ENCODE measurements at regions of chr5 and their contacts with region 1.

Region 1: GRCh38 chr5:176415952-176416924 is at the start of gene CLTB:
- DNase-seq: peak; percentile 82
- H3K4me3 ChIP-seq: peak within 1 kb of the TSS; percentile 58 to 84 (median 80)
- H3K27ac ChIP-seq: peak within 1 kb of the TSS; percentile 72
- H3K4me1 ChIP-seq: peaks cover 60% of the 10 kb centered on the region
- H3K27me3 ChIP-seq: no peaks in the 10 kb centered on the region
- CTCF ChIP-seq: peak; percentile 26 to 55
- total RNA-seq, gene CLTB: 166 to 323 TPM

Region 2: DNA sequence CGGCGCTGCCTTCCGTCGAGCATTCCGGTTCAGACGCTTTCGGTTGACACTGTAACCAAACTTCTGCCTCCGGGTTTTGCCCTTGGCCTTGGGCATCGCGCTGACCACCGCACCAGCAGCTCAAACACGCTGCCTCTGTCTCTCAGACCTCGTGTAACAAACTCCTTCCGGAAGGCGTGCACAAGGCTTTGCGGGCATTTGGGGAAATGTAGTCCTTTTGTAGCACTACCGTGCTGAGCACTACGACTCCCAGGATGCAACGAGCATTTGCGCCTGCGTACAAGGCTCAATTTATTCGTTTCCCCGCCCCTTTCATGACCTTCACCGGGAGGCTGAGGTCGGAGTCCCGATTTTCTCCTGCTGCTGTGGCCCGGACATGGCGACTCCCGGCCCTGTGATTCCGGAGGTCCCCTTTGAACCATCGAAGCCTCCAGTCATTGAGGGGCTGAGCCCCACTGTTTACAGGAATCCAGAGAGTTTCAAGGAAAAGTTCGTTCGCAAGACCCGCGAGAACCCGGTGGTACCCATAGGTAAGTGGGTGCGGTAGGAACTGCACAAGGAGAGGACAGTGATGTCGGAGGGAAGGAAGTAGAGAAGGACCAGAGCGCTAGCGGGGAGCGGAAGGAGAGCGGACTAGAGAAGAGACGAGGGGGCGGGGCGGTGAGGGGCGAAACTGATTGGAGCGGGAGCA is 27.6 kb before region 1 on chr5 and contains the starts of genes HIGD2A and NOP16:
- CTCF ChIA-PET with region 1: no interaction called
- dilution Hi-C with region 1: no loop called
- in situ Hi-C with region 1: no loop called
- intact Hi-C with region 1: loop called (anchors 1 kb)
- DNase-seq: peak; percentile 98
- H3K4me3 ChIP-seq: peak within 1 kb of the TSS; percentile 67 to 79 (median 75)
- H3K27ac ChIP-seq: peak within 1 kb of the TSS; percentile 90
- H3K4me1 ChIP-seq: peaks cover 12% of the 10 kb centered on the region
- H3K27me3 ChIP-seq: no peaks in the 10 kb centered on the region
- CTCF ChIP-seq: no peak
- total RNA-seq, gene HIGD2A: 30.3 to 93.0 TPM
- total RNA-seq, gene NOP16: 8.7 to 61.4 TPM

Region 3: DNA sequence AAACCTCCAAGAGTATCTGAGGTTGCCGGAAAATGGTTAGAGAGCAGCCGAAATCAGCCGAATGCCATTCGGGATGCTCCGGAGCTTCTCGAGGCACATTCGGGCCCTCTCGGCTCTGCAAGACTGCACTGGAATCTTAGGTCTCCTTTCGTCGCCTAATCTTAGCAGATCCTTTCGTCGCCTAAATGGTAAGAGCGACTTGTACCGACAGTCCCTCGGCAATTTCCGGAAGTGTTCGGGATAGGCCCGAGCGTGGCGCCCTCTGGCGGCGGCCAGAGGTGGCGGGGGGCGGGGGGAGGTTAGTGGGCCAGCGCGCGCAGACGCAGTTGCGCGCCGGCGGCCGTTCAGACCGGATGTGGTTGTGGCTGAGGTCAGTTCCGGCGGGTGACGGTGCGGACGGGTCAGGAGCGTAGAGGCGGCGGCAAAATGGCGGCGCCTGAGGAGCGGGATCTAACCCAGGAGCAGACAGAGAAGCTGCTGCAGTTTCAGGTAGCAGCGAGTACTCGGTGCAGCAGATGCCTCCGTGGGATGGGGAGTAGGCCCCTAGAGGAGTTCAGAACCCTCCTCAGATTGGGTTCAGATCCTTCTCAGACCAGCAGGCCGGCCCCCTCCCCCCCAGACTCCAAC is 31.9 kb after region 1 on chr5 and contains the start of gene FAF2:
- CTCF ChIA-PET with region 1: interaction called, 8 read pairs
- dilution Hi-C with region 1: no loop called
- in situ Hi-C with region 1: no loop called
- intact Hi-C with region 1: loop called (anchors 1 kb)
- DNase-seq: peak; percentile 98
- H3K4me3 ChIP-seq: peak within 1 kb of the TSS; percentile 66 to 90 (median 82)
- H3K27ac ChIP-seq: peak within 1 kb of the TSS; percentile 85
- H3K4me1 ChIP-seq: peaks cover 5% of the 10 kb centered on the region
- H3K27me3 ChIP-seq: no peaks in the 10 kb centered on the region
- CTCF ChIP-seq: peak; percentile 93 to 98
- total RNA-seq, gene FAF2: 48.5 to 58.8 TPM

Region 4: GRCh38 chr5:176537608-176538504 is 121.6 kb after region 1 on chr5:
- CTCF ChIA-PET with region 1: no interaction called
- dilution Hi-C with region 1: no loop called
- in situ Hi-C with region 1: no loop called
- intact Hi-C with region 1: loop called (anchors 1 kb)
- DNase-seq: peak; percentile 99
- H3K4me3 ChIP-seq: peak overlapping the region; percentile 67 to 88 (median 68)
- H3K27ac ChIP-seq: peak overlapping the region; percentile 91
- H3K4me1 ChIP-seq: peaks cover 57% of the 10 kb centered on the region
- H3K27me3 ChIP-seq: no peaks in the 10 kb centered on the region
- CTCF ChIP-seq: no peak

Region 5: DNA sequence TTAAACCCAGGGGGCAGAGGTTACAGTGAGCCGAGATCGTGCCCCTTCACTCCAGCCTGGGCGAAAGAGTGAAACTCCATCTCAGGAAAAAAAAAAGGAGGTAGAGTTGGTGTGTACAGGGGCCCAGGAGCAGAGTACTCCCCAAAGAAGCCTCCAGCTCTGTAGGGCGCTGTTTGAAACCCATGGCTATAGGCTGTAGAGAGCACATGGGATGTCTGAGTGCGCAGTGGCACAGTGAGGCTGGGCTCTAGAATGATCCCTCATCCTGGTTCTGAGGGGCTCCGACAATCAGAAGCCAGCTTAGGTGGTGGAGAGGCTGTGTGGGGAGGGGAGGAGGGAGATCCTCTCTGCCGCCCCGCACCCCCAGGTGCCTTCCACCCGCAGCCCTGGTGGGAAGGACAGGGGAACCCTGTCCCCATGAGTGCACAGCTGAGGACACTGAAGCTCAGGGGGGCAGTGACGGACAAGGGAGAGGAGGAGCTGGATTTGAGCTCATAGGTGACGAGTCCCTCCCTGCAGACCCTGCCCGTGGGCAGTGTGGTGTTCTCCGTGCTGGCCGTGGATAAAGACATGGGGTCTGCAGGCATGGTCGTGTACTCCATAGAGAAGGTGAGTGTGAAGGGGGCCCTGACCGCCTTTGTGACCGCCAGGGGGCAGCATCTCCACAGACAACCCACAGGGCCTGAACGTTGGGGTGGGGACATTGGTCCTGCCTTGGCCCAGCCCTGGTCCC is 157.5 kb after region 1 on chr5:
- CTCF ChIA-PET with region 1: interaction called, 7 read pairs
- dilution Hi-C with region 1: loop called (anchors 25 kb)
- in situ Hi-C with region 1: loop called in 1 of 2 experiments (anchors 5 kb)
- intact Hi-C with region 1: loop called (anchors 1 kb)
- DNase-seq: peak; percentile 20
- H3K4me3 ChIP-seq: no peak overlapping the region
- H3K27ac ChIP-seq: no peak overlapping the region
- H3K4me1 ChIP-seq: peaks cover 6% of the 10 kb centered on the region
- H3K27me3 ChIP-seq: no peaks in the 10 kb centered on the region
- CTCF ChIP-seq: peak; percentile 69 to 83

Region 6: DNA sequence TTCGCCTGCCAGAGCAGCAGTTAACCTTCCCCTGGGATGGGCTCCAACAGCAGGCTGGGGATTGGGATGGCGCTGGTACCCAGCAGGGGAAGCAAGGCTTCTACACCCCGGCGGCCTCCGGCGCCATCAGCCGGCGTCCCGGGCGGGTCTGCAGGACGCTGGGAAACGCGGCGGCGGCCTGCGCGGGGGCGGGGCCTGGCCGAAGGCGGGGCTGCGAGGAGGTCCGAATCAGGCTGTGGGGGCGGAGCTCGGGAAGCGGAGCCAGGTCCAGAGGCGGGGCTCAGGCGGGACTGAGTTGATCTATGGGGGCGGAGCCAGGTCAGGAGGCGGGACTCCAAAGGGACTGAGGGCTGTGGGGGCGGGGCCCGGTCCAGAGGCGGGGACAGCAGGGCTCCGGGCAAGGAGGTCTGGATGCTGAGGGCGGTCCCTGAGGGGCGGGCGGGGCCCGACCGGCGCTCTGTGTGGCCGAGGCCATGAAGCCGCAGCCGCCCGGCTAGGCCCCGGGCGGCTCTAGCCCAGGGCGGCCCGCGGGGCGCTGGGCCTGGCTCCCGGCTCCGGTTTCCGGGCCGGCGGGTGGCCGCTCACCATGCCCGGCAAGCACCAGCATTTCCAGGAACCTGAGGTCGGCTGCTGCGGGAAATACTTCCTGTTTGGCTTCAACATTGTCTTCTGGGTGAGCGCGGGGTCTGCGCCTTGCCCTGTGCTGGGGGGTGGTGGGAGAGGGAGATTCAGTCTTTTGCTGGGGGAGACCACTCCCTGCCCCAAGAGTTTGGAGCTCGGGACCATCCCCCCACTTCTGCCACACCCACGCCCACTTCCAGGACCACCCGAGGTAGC is 231.0 kb after region 1 on chr5 and contains the start of gene TSPAN17:
- CTCF ChIA-PET with region 1: no interaction called
- dilution Hi-C with region 1: no loop called
- in situ Hi-C with region 1: no loop called
- intact Hi-C with region 1: loop called (anchors 2 kb)
- DNase-seq: peak; percentile 98
- H3K4me3 ChIP-seq: peak within 1 kb of the TSS; percentile 65 to 72 (median 70)
- H3K27ac ChIP-seq: peak within 1 kb of the TSS; percentile 37
- H3K4me1 ChIP-seq: peaks cover 13% of the 10 kb centered on the region
- H3K27me3 ChIP-seq: no peaks in the 10 kb centered on the region
- CTCF ChIP-seq: peak in 1 of 2 donors; percentile 51
- total RNA-seq, gene TSPAN17: 47.4 to 48.8 TPM

Measured in mammary epithelial cell (primary cell).